ENCODE measurements at regions of chr18 and their contacts with region 1.

Region 1: GRCh38 chr18:3995476-3996102 is 459.5 kb downstream of the DLGAP1 start:
- DNase-seq: peak; percentile 63
- ATAC-seq: no peak

Region 2: GRCh38 chr18:2529154-2529553 is 1466.4 kb before region 1 on chr18:
- intact Hi-C with region 1: no loop called
- DNase-seq: no peak
- ATAC-seq: no peak

Region 3: DNA sequence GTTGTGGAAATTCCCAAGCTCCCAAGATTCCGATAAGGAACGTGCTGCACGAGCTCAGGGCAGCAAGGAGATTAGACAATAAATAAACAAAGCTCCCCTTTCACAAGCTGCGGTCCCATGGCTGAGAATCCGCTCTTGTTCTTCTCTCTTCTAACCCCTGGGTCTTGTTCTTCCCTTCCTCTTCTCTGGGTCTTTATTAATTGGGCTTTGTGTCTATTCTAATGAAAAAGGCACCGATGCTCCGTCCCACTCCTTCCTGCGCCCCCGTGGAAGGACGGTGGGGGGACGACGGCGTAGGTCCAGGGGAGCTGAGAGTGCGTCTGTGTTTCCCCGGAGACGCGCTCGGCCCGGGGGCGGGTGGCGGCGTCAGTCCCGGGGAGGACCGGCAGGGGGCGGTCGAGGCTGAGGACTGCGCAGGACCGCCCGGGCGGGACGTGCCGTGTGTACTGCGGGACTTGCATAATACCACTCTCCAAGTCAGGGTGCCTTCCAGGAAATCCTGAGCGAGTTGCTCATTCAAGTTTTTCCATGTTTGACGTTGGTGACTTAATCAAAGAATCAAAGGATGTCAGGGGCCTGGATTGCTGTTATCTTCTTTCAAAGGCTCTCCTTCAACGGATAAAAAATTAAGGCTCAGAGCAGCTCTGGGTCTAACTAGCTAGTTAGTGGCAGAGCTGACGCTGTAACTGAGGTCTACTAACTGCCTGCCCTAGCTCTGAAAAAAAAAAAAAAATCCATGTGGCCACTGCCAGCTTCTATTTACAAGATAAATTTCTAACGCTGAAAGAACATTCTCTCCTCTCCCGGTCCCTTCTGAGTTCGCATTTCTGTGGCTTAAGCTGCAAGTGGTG is 224.2 kb before region 1 on chr18:
- intact Hi-C with region 1: loop called (anchors 10 kb)
- DNase-seq: peak; percentile 92
- ATAC-seq: peak; percentile 98